Posterior cingulate gyrus (tissue), 11 donors: ENCODE measurements at regions of chr5 and their contacts with region 1.

Region 1: GRCh38 chr5:103258368-103258956 is at the start of gene MACIR:
- DNase-seq: peak; percentile 86 to 98 (median 92)

Region 2: GRCh38 chr5:103003872-103004271 is 254.6 kb before region 1 on chr5:
- intact Hi-C with region 1: no loop called
- DNase-seq: no peak

Region 3: GRCh38 chr5:103119765-103120606 is 138.5 kb before region 1 on chr5 and contains the starts of genes GIN1 and PPIP5K2:
- intact Hi-C with region 1: loop called (anchors 10 kb)
- DNase-seq: peak; percentile 92 to 99 (median 97)

Region 4: DNA sequence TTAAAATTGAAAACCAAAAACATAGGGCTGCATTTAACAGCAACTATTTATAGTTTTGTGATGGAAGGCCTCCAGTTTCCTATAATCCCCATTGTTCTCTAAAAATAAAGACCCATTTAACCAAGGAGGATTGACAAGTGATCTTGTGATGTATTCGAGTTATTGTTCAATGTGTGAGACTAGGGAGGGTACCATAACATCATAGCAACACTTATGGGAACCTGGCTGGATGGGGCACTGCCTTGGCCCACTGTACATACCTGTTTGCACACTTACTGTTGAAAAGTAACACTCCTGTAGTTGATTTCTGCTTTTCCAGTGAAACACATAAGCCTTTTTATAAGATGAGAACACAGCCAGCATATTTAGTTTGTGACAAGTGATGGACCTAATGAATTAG is 32.4 kb after region 1 on chr5:
- intact Hi-C with region 1: loop called (anchors 2 kb)
- DNase-seq: peak in 1 of 10 donors; percentile 26

Region 5: GRCh38 chr5:103356350-103357091 is 98.1 kb after region 1 on chr5:
- intact Hi-C with region 1: no loop called
- DNase-seq: no peak

Region 6: DNA sequence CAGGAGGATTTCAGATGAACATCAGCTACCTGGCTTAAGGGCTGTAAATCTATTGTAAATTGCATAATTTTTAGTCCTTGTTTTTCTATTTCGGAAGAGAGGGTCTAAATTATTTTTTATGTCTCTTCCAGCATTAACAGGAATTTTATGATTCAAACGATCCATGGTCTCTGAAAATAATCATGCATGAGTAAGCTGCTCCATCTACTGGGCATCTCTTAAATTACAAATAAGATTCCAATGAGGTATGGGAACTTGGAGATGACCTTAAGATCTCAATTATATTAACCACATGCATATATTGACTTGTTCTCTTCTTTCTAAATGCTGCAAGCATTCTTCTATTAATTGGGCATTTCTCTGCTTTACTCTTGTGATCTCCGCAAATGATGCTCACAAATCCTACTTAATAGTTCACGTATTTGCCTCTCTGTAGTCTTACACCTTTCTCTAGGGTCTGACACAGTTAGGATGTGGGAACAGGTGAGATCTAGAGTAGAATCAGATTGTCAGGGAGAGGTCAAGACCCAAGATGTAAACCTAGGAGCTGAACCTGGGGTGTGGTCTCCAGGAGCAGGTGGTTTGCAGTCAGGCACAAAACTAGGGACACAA is 217.3 kb after region 1 on chr5:
- intact Hi-C with region 1: loop called (anchors 1 kb)
- DNase-seq: no peak